Endothelial cell of umbilical vein (primary cell): ENCODE measurements at regions of chr20 and their contacts with region 1.

Region 1: DNA sequence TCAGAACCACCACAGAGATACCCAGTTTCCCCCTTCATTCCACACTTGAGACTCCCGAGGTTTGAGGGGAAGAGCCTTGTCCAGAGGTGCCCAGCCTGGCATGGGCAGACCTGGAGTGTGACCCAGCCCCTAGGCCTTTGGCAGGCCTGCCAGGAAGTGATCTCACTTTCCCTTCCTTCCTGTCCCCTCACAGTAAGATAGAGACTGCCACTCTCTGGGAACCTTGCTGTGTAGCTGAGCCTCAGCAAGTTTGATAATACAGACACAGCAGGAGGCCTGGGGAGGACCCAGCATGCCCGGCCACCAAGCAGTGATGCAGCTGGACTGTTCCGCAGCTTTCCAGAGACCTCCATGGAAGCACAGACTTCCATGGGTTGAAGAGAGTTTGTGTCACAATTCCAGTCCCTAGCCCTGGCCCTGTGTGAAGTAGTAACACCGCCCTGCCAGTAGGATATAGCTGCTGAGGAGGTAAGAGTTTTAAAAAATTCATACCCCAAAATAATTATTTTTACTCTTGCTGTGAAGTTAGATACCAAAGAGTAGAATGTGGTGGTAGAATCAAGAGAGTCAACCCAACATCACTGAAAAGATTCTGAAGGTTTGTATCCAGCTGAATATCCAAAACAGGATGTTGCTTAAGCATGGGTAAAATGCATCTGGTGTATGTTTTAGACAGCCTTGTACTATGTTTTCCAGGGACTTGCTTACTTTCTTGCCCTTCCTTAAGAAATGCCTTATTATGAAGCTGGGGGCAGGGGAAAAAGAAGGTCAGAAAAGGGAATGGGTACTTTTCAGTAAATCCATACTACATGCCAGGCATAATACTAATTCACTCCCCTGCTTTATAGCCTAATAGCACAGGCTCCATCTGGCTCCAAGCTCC is 16.3 kb downstream of the PKIG start:
- DNase-seq: peak; percentile 71
- H3K4me3 ChIP-seq: no peak overlapping the region
- H3K27ac ChIP-seq: peak overlapping the region; percentile 81
- H3K4me1 ChIP-seq: peaks cover 79% of the 10 kb centered on the region
- H3K27me3 ChIP-seq: no peaks in the 10 kb centered on the region
- CTCF ChIP-seq: peak; percentile 13 to 24
- POLR2A ChIP-seq: no peak

Region 2: GRCh38 chr20:44552950-44553908 is 45.4 kb before region 1 on chr20:
- CTCF ChIA-PET with region 1: interaction called, 3 read pairs
- POLR2A ChIA-PET with region 1: no interaction called
- dilution Hi-C with region 1: no loop called
- intact Hi-C with region 1: loop called (anchors 1 kb)
- DNase-seq: peak; percentile 92
- H3K4me3 ChIP-seq: no peak overlapping the region
- H3K27ac ChIP-seq: peak overlapping the region; percentile 85
- H3K4me1 ChIP-seq: peaks cover 37% of the 10 kb centered on the region
- H3K27me3 ChIP-seq: no peaks in the 10 kb centered on the region
- CTCF ChIP-seq: no peak
- POLR2A ChIP-seq: no peak